ENCODE measurements at regions of chr17 and their contacts with region 1.

Region 1: DNA sequence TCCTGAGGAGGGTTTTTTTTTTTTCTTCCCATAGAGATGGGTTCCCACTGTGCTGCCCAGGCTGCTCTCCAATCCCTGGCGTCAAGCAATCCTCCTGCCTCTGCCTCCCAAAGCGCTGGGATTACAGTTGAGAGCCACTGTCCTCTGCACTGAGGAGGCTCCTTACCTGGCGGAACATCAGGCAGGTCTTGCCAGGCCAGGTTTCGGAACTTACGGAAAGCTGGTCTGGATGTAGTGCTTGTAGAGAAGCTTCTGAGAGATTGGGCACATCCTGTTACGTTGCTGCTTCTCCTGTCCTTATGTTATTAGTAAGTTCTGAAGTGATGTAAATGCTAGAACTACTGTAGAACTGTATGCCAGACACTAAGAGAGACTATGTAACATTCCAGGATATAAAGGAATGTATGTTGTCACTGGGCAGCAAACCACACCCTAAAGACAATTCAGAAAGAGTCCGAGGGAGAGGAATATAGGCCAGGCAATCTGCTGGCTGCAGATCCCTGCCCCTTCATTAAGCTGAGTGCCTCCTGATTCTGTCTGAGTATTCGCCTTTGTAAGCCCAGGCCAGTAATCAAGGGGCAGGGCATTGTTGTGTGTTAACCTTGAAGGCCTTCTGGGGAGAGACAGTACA is 21.1 kb downstream of the ETV4 start:
- DNase-seq: no peak
- ATAC-seq: no peak
- H3K4me3 ChIP-seq: no peak overlapping the region
- H3K27ac ChIP-seq: no peak overlapping the region
- H3K4me1 ChIP-seq: peaks cover 8% of the 10 kb centered on the region
- H3K27me3 ChIP-seq: no peaks in the 10 kb centered on the region
- CTCF ChIP-seq: no peak

Region 2: DNA sequence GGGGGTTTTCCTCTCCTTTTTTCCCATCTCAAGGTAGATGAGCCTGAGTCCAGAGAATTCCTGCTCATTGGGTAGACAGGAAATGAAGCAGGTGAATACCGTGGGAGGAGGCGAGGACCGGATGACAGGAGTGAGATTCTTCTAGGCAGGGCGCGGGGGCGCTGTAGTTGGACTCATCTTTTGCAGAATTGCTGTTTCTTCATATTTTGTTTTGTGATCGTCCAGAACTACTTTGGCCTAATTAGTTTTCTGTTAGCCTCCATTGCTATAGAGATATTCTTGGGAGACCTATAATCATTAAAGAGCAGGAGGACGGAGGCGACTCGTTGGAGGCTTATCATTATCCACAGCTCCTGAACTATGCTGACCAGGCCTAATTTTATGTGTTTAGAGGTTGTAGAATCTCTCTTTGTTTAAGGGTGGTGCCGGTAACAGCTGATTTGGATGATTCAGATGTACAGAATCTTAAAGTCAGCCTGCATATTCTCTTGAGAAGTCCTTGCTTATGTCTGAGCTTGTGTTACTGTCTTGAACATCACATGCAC is 1065.7 kb before region 1 on chr17:
- intact Hi-C with region 1: no loop called
- DNase-seq: peak; percentile 42 to 67
- ATAC-seq: peak in 3 of 4 donors; percentile 54 to 67 (median 60)
- H3K4me3 ChIP-seq: peak overlapping the region; percentile 84
- H3K27ac ChIP-seq: peak overlapping the region; percentile 96
- H3K4me1 ChIP-seq: peaks cover 51% of the 10 kb centered on the region
- H3K27me3 ChIP-seq: no peaks in the 10 kb centered on the region
- CTCF ChIP-seq: peak; percentile 19

Region 3: GRCh38 chr17:43483674-43484372 is 41.2 kb before region 1 on chr17 and contains the start of gene DHX8:
- intact Hi-C with region 1: no loop called
- DNase-seq: peak; percentile 96 to 98
- ATAC-seq: peak; percentile 98 to 100 (median 98)
- H3K4me3 ChIP-seq: peak within 1 kb of the TSS; percentile 83
- H3K27ac ChIP-seq: peak within 1 kb of the TSS; percentile 79
- H3K4me1 ChIP-seq: peaks cover 17% of the 10 kb centered on the region
- H3K27me3 ChIP-seq: no peaks in the 10 kb centered on the region
- CTCF ChIP-seq: peak; percentile 100
- total RNA-seq, gene DHX8: 22.5 to 42.5 (median 27.9) TPM

Region 4: GRCh38 chr17:43673516-43674323 is 148.7 kb after region 1 on chr17:
- intact Hi-C with region 1: loop called in 1 of 2 experiments (anchors 2 kb)
- DNase-seq: peak; percentile 68 to 77
- ATAC-seq: peak; percentile 65 to 79 (median 68)
- H3K4me3 ChIP-seq: no peak overlapping the region
- H3K27ac ChIP-seq: no peak overlapping the region
- H3K4me1 ChIP-seq: no peaks in the 10 kb centered on the region
- H3K27me3 ChIP-seq: no peaks in the 10 kb centered on the region
- CTCF ChIP-seq: peak; percentile 97